ENCODE measurements at regions of chr6 and their contacts with region 1.

Region 1: DNA sequence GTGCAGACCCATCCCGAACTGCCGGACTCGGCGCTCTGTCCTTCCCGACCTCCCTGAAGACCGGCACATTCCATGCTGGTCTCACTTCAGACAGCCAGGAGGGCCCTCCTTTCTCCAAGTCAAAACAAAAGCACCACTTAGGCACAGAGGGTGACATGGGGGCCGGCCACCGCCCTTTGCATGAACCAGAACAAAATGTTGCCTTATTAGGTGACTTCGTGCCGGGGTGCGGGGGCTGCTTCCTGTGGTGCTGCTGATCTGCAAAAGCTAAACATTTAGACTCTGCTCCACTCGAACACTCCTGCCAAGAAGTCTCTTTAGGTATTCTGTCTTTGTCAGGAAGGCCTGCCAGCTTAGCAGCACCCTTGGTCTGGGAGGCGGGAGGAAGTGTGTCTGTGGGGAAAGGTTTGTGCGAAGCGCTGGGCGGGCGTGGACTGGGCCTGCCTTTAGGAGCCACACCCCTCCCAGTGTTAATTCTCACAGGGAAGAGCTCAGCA is 133.8 kb downstream of the SMOC2 start:
- DNase-seq: peak; percentile 93
- H3K4me3 ChIP-seq: peak overlapping the region in 3 of 4 donors; percentile 2 to 26 (median 25)
- H3K27ac ChIP-seq: peak overlapping the region; percentile 67 to 83 (median 80)
- H3K4me1 ChIP-seq: peaks cover 0 to 41% (median 34%) of the 10 kb centered on the region in 4 donors
- H3K27me3 ChIP-seq: no peaks in the 10 kb centered on the region
- CTCF ChIP-seq: no peak
- EP300 ChIP-seq: peak in 2 of 4 donors; percentile 6 to 51
- POLR2A ChIP-seq: no peak

Region 2: DNA sequence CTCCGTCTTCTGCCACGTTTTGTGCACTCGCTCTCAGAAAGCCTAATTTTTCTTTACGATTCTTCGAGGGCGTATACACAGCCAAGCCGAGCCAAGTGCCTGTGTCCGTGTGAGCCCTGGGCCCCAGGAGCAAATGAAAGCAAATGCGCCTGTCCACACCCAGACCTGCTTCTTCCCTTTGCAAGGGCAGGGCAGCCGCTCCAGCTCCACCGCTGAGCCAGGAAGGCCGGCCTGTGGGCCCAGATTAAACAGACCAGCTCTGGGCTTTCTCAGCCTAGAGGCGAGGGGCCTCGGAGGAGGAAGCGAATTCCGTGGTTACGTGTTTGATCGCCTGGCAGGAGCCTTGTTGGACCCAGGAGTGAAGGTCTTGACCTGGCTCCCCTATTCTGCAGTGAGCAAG is 50.9 kb after region 1 on chr6:
- intact Hi-C with region 1: loop called (anchors 5 kb)
- DNase-seq: peak; percentile 26
- H3K4me3 ChIP-seq: no peak overlapping the region
- H3K27ac ChIP-seq: no peak overlapping the region
- H3K4me1 ChIP-seq: peaks cover 0 to 27% (median 18%) of the 10 kb centered on the region in 4 donors
- H3K27me3 ChIP-seq: no peaks in the 10 kb centered on the region
- CTCF ChIP-seq: no peak
- EP300 ChIP-seq: no peak
- POLR2A ChIP-seq: no peak

Measured in sigmoid colon (tissue), 7 donors.